ENCODE measurements at regions of chr1 and their contacts with region 1.

Region 1: DNA sequence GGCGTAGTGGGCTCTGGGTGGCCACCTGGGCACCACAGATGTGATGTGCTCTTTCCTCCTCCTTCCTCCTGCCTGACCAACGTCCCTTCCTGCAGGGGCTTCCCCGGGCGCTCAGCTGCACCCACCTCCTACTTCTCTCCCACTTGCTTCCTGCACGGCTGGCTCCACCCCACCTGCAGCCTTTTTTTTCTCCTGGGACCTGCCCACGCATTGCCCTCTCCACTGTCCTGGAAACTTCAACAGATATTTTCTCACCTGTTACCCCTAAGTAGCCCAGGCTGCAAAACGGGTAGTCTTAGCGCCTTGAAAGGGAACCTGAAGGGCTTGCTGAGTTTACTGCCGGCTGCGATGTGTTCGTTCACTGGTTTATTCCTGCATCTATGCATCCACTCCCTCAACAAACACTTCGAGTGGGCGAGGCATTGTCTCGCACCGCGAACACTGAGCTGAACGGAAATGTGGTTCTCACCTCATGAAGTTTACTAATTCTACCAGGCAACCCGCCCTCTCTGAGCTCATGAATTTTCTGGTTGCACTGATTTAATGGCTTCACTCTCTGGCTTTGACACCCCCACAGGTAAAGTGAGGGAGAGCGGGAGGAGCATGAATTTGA is 23.6 kb downstream of the ZBTB18 start:
- DNase-seq: peak; percentile 36 to 91 (median 86)
- ATAC-seq: peak; percentile 96
- H3K4me3 ChIP-seq: peak overlapping the region; percentile 45
- H3K4me3 Mint-ChIP-seq: peak overlapping the region; percentile 75 to 91 (median 88)
- H3K27ac ChIP-seq: peak overlapping the region; percentile 73
- H3K27ac Mint-ChIP-seq: peak overlapping the region; percentile 50 to 99 (median 97)
- H3K4me1 ChIP-seq: peaks cover 16 to 32% of the 10 kb centered on the region in 2 donors
- H3K4me1 Mint-ChIP-seq: peaks cover 19 to 64% (median 54%) of the 10 kb centered on the region in 7 donors
- H3K27me3 ChIP-seq: no peaks in the 10 kb centered on the region
- H3K27me3 Mint-ChIP-seq: peaks cover 0 to 20% (median 0%) of the 10 kb centered on the region in 5 donors

Region 2: DNA sequence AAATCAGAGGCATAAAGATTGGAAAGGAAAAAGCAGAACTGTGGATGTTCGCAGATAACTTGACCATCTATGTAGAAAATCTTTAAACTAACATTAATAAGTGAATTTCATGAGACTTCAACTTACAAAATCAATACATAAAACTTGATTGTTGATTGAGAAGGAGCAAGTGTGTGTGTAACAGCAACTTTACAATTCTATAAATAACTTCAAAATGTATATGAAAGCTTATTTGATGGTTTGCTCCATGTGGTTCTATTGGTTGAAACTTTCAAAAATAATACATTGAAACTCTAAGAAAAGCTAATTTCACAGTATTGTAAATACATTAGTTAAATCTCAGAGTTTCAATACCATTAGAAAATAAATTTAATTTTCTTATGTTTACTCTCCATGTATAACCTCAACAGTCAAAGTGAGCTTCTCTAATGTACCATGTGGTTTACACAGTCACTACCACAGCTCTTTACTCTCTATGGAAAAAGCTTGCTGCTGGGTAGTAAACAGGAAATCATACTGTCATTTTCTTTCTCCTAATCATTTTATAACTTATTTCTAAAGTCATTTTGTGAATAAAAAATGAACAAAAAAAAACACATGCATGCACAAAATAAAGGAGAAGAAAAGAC is 236.6 kb before region 1 on chr1:
- CTCF ChIA-PET with region 1: no interaction called
- POLR2A ChIA-PET with region 1: no interaction called
- intact Hi-C with region 1: no loop called
- DNase-seq: peak in 7 of 9 donors; percentile 22 to 72 (median 49)
- ATAC-seq: peak; percentile 88
- H3K4me3 ChIP-seq: no peak overlapping the region
- H3K4me3 Mint-ChIP-seq: peak overlapping the region in 9 of 10 donors; percentile 22 to 74 (median 58)
- H3K27ac ChIP-seq: peak overlapping the region; percentile 40
- H3K27ac Mint-ChIP-seq: peak overlapping the region; percentile 65 to 94 (median 83)
- H3K4me1 ChIP-seq: peaks cover 10 to 29% of the 10 kb centered on the region in 2 donors
- H3K4me1 Mint-ChIP-seq: peaks cover 14 to 73% (median 59%) of the 10 kb centered on the region in 7 donors
- H3K27me3 ChIP-seq: no peaks in the 10 kb centered on the region
- H3K27me3 Mint-ChIP-seq: no peaks in the 10 kb centered on the region

Region 3: DNA sequence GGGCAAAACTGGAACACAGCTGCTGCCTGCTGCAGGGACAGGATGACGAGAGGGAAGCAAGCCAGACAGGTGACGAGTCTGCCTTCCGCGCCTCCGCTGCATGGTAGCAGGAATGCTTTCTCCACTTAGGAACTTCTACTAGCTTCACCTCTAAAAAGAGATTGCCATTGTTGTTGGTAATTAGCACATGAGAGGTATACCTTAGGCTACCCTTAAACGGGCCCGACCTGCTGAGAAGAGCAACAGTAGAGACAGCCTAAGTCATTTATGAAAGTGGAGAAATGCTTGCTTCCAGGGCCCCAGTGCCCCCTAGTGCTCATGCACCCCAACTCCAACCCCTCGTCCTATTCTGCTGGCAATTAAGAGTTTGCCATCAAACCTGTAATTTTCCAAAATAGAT is 127.7 kb before region 1 on chr1:
- CTCF ChIA-PET with region 1: no interaction called
- POLR2A ChIA-PET with region 1: no interaction called
- intact Hi-C with region 1: loop called in 1 of 2 experiments (anchors 1 kb)
- DNase-seq: peak in 6 of 9 donors; percentile 11 to 52 (median 38)
- ATAC-seq: peak; percentile 76
- H3K4me3 ChIP-seq: no peak overlapping the region
- H3K4me3 Mint-ChIP-seq: no peak overlapping the region
- H3K27ac ChIP-seq: no peak overlapping the region
- H3K27ac Mint-ChIP-seq: peak overlapping the region in 1 of 9 donors; percentile 17
- H3K4me1 ChIP-seq: no peaks in the 10 kb centered on the region
- H3K4me1 Mint-ChIP-seq: no peaks in the 10 kb centered on the region
- H3K27me3 ChIP-seq: no peaks in the 10 kb centered on the region
- H3K27me3 Mint-ChIP-seq: peaks cover 0 to 8% (median 5%) of the 10 kb centered on the region in 5 donors

Region 4: DNA sequence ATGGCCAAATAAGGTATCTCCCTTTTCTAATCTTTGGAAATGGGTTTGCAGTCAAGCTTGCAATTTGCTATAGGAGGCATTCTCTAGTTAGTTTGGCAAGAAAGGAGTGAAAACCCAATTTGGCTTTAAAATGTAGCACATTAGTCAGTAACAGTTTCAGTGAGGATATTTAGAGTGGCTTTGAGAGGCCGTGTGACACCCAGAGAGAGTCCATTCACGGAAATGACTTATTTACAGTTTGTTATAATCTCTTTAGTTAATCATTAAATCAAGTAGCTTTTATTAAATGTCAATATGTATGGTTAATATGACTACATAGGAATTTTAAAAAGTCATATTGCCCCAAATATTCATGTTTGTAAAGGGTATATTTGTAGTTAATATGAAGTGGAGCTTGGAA is 14.0 kb before region 1 on chr1:
- CTCF ChIA-PET with region 1: interaction called, 8 read pairs
- POLR2A ChIA-PET with region 1: interaction called, 32 read pairs
- intact Hi-C with region 1: no loop called
- DNase-seq: no peak
- ATAC-seq: no peak
- H3K4me3 ChIP-seq: no peak overlapping the region
- H3K4me3 Mint-ChIP-seq: no peak overlapping the region
- H3K27ac ChIP-seq: no peak overlapping the region
- H3K27ac Mint-ChIP-seq: no peak overlapping the region
- H3K4me1 ChIP-seq: no peaks in the 10 kb centered on the region
- H3K4me1 Mint-ChIP-seq: peaks cover 0 to 27% (median 2%) of the 10 kb centered on the region in 7 donors
- H3K27me3 ChIP-seq: no peaks in the 10 kb centered on the region
- H3K27me3 Mint-ChIP-seq: peaks cover 0 to 15% (median 0%) of the 10 kb centered on the region in 5 donors

Region 5: DNA sequence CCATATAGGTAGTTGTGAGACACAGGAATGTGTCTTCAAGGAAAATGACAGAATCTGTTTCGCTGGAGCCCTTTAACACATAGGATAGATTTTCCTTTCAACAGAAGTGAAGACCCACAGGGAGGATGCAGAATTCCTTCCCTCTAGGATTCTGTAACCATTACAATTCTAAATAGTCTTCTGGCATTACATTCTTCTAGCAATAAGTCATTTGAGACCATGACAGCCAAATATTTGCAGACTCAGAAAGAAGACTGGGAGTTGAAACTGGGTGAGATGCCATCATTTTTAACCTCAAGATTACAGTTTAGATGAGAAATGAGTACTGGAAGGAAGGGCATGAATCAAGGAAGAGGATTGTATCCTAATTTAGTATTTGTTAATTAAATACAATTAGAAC is 38.0 kb after region 1 on chr1:
- CTCF ChIA-PET with region 1: no interaction called
- POLR2A ChIA-PET with region 1: interaction called, 3 read pairs
- intact Hi-C with region 1: loop called in 1 of 2 experiments (anchors 5 kb)
- DNase-seq: no peak
- ATAC-seq: no peak
- H3K4me3 ChIP-seq: no peak overlapping the region
- H3K4me3 Mint-ChIP-seq: no peak overlapping the region
- H3K27ac ChIP-seq: no peak overlapping the region
- H3K27ac Mint-ChIP-seq: no peak overlapping the region
- H3K4me1 ChIP-seq: no peaks in the 10 kb centered on the region
- H3K4me1 Mint-ChIP-seq: no peaks in the 10 kb centered on the region
- H3K27me3 ChIP-seq: no peaks in the 10 kb centered on the region
- H3K27me3 Mint-ChIP-seq: peaks cover under 1 to 8% (median 5%) of the 10 kb centered on the region in 5 donors

Region 6: DNA sequence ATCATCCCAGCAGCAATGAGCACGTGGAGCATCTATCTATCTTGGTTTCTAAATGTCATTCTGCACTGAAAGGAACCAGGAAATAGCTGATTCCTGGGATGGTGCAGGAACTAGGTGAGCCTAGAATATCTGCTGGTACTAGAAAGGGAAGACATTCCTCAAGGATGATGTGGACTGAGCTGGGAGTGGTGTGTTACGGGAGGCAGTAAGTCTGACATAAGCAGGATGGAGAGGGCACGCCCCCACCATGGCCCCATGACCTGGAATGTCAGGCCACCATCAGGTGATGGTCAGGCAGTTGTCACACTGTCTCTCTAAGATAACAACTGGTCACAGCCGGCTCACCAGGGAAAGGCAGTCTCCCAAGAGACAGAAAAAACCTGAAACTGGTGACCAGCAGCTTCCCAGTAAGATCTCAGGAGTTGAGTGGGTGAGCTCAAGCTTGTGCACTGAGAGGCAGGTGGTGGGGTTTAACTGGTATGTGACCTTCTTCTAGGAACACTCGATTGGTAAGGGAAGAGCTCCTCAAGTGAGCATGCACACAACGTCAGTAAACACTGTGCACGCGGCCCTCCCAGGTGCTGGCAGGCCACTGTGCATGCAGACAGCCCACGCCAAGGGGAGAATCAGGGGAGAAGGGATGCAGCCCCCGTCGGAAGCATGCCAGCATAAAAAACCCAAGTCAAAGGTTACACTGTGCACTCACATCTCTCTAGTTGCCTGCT is 228.4 kb after region 1 on chr1:
- CTCF ChIA-PET with region 1: no interaction called
- POLR2A ChIA-PET with region 1: no interaction called
- intact Hi-C with region 1: loop called in 1 of 2 experiments (anchors 1 kb)
- DNase-seq: no peak
- ATAC-seq: no peak
- H3K4me3 ChIP-seq: no peak overlapping the region
- H3K4me3 Mint-ChIP-seq: no peak overlapping the region
- H3K27ac ChIP-seq: no peak overlapping the region
- H3K27ac Mint-ChIP-seq: peak overlapping the region in 3 of 9 donors; percentile 4 to 43 (median 7)
- H3K4me1 ChIP-seq: peaks cover 0 to 3% of the 10 kb centered on the region in 2 donors
- H3K4me1 Mint-ChIP-seq: peaks cover 5 to 13% (median 7%) of the 10 kb centered on the region in 7 donors
- H3K27me3 ChIP-seq: no peaks in the 10 kb centered on the region
- H3K27me3 Mint-ChIP-seq: peaks cover 0 to 2% (median 0%) of the 10 kb centered on the region in 5 donors